Activated B cell treated with CpG ODN at 0.5 μM for 24 hours (primary cell): ENCODE measurements at regions of chr18 and their contacts with region 1.

Region 1: GRCh38 chr18:58195278-58195765 is 151.3 kb downstream of the NEDD4L start:
- DNase-seq: peak; percentile 34
- ATAC-seq: peak; percentile 68
- H3K4me3 Mint-ChIP-seq: peak overlapping the region; percentile 85
- H3K27ac Mint-ChIP-seq: peak overlapping the region; percentile 54
- H3K4me1 Mint-ChIP-seq: peaks cover 25% of the 10 kb centered on the region
- H3K27me3 Mint-ChIP-seq: peaks cover 2% of the 10 kb centered on the region
- CTCF ChIP-seq: no peak

Region 2: DNA sequence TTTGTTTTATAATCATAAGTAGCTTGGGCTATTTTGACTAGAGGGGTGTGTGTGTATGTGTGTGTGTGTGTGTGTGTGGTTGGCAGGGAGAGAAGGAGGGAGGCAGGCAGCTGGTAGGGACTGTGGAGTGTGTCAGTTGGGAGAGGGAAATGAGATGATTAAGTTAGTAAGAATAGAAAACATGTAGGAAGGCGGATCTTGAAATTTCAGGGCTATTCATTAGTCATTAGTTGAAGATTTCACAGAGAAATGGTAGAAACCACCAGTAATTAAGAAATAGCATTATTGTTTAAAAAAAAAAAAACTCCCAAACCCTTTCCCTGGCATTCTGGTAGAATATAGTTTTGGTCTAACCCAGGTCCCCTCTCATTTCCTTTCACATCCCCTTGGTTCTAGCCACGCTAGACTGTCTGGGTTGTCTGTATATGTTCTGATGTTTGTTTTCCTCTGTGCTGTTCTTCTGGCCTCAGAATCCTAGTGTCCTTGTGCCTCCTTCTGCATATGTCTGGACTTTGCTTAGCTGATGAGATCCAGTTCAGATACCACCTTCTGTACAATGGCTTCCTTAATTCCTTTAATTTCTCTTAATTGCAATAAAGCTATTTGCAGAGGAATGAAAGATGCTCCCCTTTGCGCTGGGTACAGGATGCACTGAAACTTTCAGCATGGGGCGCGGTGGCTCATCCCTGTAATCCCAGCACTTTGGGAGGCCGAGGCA is 10.3 kb after region 1 on chr18:
- CTCF ChIA-PET with region 1: no interaction called
- POLR2A ChIA-PET with region 1: no interaction called
- intact Hi-C with region 1: loop called (anchors 1 kb)
- DNase-seq: no peak
- ATAC-seq: no peak
- H3K4me3 Mint-ChIP-seq: no peak overlapping the region
- H3K27ac Mint-ChIP-seq: no peak overlapping the region
- H3K4me1 Mint-ChIP-seq: peaks cover 19% of the 10 kb centered on the region
- H3K27me3 Mint-ChIP-seq: no peaks in the 10 kb centered on the region
- CTCF ChIP-seq: no peak

Region 3: DNA sequence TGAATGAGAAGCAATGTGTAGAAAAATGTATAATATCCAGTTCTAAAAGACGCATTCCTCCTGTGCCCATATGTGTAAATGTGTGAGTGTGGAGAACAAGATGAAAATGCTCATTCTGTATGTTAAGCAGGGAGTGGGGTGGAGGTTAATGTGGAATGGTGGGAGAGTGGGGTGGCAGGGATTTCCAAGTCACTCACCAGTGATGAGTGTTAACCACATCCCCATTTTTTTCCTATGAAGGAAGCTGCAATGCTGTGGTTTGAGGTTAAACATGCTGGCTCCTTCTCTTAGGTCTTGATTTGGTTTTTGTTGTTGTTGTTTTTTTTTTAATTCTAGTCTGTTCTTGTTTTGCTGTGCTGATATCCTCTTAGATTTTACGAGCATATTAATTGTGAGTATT is 18.1 kb after region 1 on chr18:
- CTCF ChIA-PET with region 1: no interaction called
- POLR2A ChIA-PET with region 1: no interaction called
- intact Hi-C with region 1: loop called (anchors 2 kb)
- DNase-seq: no peak
- ATAC-seq: no peak
- H3K4me3 Mint-ChIP-seq: no peak overlapping the region
- H3K27ac Mint-ChIP-seq: no peak overlapping the region
- H3K4me1 Mint-ChIP-seq: peaks cover 45% of the 10 kb centered on the region
- H3K27me3 Mint-ChIP-seq: no peaks in the 10 kb centered on the region
- CTCF ChIP-seq: no peak

Region 4: DNA sequence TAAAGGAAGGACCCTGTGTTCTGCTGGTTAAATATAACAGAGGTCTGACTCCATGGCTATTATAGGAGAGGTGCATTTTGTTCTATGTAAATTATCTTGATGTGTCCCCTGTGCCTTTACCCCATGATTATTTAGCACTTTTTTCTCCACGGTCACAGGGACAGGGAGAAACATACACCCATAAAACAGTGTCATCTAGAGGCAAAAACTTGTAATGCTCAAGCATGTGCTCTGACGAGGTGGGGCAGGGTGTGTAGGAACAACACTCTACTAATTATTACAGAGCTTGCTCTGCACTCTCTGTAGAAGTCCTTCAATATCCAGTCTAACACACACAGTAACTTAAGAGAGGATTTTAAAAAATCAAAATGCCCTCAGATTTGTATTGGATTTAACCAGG is 36.6 kb after region 1 on chr18:
- CTCF ChIA-PET with region 1: no interaction called
- POLR2A ChIA-PET with region 1: no interaction called
- intact Hi-C with region 1: loop called (anchors 5 kb)
- DNase-seq: no peak
- ATAC-seq: peak; percentile 47
- H3K4me3 Mint-ChIP-seq: no peak overlapping the region
- H3K27ac Mint-ChIP-seq: no peak overlapping the region
- H3K4me1 Mint-ChIP-seq: peaks cover 24% of the 10 kb centered on the region
- H3K27me3 Mint-ChIP-seq: no peaks in the 10 kb centered on the region
- CTCF ChIP-seq: no peak

Region 5: DNA sequence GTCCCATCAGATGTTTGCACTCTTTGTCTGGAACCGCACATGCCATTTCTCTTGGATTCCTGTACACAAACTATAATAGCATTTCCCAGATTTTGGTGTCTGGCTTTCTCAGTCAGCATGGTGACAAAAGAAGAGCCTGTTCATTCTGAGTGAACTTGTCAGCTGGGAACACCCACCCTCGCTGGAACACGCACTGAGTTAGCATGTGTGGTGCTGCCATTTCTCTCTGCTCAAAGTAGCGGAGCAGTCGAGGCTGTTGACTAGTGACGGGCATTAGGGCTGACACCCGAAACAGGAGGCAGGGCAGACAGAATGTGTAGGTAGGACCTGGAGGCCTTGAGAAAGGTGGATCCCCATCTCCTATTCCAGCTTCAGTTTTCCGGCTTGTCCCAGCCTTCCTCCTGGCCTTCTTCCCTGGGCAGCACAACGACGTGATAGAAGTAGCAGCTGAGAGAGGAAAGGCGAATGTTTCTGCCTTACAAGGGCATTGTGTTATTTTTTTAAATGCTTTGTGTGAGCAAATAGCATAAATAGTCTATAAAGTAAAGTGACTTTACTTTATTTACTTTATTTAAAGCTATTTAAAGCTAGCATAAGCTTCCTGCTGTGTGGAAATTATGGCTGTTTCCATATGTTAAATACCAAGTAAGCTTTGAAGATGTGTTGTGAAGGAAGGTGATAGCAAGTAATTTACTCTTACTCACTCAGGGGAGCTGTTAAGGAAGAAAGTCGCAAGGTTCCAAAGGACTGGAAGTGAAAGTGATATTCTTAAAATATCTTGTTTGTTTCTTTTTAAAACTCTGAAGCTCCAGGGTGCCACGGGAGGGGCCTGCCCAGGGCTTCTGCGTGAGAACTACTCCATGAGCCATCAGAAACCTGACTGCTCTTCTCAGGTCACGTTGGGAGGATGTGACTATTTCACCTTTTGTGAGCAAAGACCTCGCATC is 121.3 kb after region 1 on chr18:
- CTCF ChIA-PET with region 1: no interaction called
- POLR2A ChIA-PET with region 1: no interaction called
- intact Hi-C with region 1: loop called (anchors 5 kb)
- DNase-seq: no peak
- ATAC-seq: no peak
- H3K4me3 Mint-ChIP-seq: no peak overlapping the region
- H3K27ac Mint-ChIP-seq: no peak overlapping the region
- H3K4me1 Mint-ChIP-seq: peaks cover 13% of the 10 kb centered on the region
- H3K27me3 Mint-ChIP-seq: no peaks in the 10 kb centered on the region
- CTCF ChIP-seq: no peak

Region 6: DNA sequence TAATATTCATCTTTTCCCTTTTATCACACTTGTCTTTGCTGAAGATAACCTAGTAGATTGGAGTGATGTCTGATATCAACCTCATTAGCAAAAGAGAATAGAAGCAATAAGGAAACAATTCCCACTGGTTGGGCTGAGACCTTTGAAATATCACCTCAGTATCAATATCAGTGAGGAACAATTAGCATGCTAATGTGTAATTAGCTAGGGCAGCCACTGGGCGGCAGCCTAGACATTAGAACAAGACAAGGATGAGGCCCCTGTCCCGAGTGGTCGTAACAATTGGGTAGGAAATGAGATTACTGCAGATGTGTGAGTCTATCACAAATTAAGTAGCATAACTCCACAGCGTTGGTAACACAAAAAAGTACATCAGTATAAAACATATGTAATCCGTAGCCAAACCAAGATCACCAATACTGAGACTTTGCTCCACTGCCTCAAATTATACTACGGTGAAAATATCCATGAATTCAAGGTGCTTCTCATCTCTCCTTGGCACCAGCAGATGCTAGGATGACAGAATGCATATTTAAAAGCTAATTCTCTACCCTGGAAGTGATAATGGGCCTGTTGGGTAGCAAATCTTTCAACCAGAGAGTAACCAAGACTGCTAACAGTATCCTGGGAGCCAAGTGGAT is 334.5 kb after region 1 on chr18:
- CTCF ChIA-PET with region 1: no interaction called
- POLR2A ChIA-PET with region 1: interaction called, 11 read pairs
- intact Hi-C with region 1: no loop called
- DNase-seq: peak; percentile 54
- ATAC-seq: peak; percentile 82
- H3K4me3 Mint-ChIP-seq: no peak overlapping the region
- H3K27ac Mint-ChIP-seq: no peak overlapping the region
- H3K4me1 Mint-ChIP-seq: peaks cover 44% of the 10 kb centered on the region
- H3K27me3 Mint-ChIP-seq: no peaks in the 10 kb centered on the region
- CTCF ChIP-seq: peak; percentile 83